HEK293 (cell line): ENCODE measurements at regions of chr20 and their contacts with region 1.

Region 1: GRCh38 chr20:2172305-2173175 is 70.9 kb downstream of the STK35 start:
- H3K4me3 ChIP-seq: no peak overlapping the region
- H3K27ac ChIP-seq: no peak overlapping the region
- H3K4me1 ChIP-seq: no peaks in the 10 kb centered on the region
- CTCF ChIP-seq: peak; percentile 84

Region 2: GRCh38 chr20:1965520-1966351 is 206.8 kb before region 1 on chr20:
- CTCF ChIA-PET with region 1: interaction called, 62 read pairs
- POLR2A ChIA-PET with region 1: no interaction called
- H3K4me3 ChIP-seq: no peak overlapping the region
- H3K27ac ChIP-seq: no peak overlapping the region
- H3K4me1 ChIP-seq: no peaks in the 10 kb centered on the region
- CTCF ChIP-seq: peak; percentile 86

Region 3: DNA sequence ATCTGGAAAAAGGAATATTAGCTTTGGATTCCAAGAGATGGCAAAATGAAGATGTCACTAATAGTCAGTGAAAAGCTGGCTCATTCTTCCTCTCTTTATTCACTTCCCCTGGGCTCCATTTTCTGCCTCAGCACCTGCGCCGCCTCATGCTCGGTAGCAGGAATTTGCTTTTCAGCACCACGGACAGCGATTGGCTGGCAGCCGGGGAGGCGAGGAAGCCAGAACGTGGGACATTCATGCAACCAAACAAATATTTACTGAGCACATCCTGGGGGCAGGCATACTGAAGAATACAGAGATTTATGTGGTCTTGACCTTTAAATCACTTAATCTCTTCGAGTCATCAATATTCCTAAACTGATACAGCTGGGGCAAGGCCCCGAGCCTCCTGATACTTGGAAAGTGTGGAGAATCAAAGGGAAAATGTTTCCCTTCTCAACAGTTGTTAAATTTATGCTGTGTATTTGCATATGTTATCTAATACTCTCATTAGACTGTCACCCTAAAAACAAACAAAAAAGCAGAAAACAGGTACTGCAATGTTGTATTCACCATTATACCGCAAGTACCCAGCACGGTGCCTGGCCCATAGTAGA is 166.6 kb before region 1 on chr20:
- CTCF ChIA-PET with region 1: interaction called, 80 read pairs
- POLR2A ChIA-PET with region 1: no interaction called
- H3K4me3 ChIP-seq: no peak overlapping the region
- H3K27ac ChIP-seq: no peak overlapping the region
- H3K4me1 ChIP-seq: no peaks in the 10 kb centered on the region
- CTCF ChIP-seq: no peak

Region 4: DNA sequence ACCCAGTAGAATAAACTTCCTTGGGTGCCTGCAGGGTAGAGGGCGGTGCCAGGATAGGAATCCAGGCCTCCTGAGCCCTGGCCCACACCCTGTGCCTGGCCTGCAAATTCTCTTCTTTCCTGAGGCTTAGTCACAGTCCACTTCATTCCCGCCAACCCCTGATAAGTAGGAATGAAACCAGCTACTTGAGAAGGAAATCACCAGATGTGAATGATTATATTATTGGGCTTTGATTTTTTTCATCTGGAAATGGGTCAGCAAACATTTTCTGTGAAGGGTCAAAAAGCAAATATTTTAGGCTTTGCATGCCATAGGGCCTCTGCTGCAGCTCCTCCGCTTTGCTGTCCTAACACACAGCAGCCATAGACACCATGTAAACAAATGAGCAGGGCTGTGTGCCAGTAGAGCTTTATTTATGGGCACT is 20.7 kb before region 1 on chr20:
- CTCF ChIA-PET with region 1: interaction called, 14 read pairs
- POLR2A ChIA-PET with region 1: no interaction called
- H3K4me3 ChIP-seq: no peak overlapping the region
- H3K27ac ChIP-seq: no peak overlapping the region
- H3K4me1 ChIP-seq: no peaks in the 10 kb centered on the region
- CTCF ChIP-seq: no peak

Region 5: GRCh38 chr20:2183381-2183780 is 10.8 kb after region 1 on chr20:
- CTCF ChIA-PET with region 1: interaction called, 24 read pairs
- POLR2A ChIA-PET with region 1: interaction called, 3 read pairs
- H3K4me3 ChIP-seq: no peak overlapping the region
- H3K27ac ChIP-seq: no peak overlapping the region
- H3K4me1 ChIP-seq: no peaks in the 10 kb centered on the region
- CTCF ChIP-seq: no peak

Region 6: GRCh38 chr20:2217857-2218539 is 45.5 kb after region 1 on chr20:
- CTCF ChIA-PET with region 1: no interaction called
- POLR2A ChIA-PET with region 1: no interaction called
- H3K4me3 ChIP-seq: no peak overlapping the region
- H3K27ac ChIP-seq: no peak overlapping the region
- H3K4me1 ChIP-seq: no peaks in the 10 kb centered on the region
- CTCF ChIP-seq: no peak